ENCODE measurements at regions of chr19 and their contacts with region 1.

Region 1: DNA sequence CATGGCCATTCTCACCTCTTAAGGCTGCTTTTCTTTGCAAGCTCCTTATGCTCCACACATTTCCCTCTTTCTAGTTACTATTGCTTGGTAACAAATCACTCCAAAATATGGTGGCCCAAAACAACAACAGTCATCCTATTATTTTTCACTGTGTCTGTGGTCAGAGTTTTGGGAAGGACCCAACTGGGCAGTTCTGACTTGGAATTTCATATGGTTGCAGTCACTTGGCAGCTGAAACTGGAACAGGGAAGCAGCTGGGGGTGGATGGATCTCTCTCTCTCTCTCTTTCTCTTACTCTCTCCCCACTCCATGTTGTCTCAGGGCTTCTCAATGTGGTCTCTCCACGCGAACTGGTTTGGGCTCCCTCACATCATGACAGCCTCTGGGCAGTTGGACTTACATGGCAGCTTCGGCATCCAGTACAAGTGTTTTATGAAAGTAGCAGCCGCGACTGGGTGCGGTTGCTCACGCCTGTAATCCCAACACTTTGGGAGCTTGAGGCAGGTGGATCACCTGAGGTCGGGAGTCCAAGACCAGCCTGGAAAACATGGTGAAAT is 39.6 kb downstream of the NUMBL start:
- DNase-seq: no peak
- CTCF ChIP-seq: no peak

Region 2: GRCh38 chr19:40811478-40812341 is 160.9 kb after region 1 on chr19:
- in situ Hi-C with region 1: loop called (anchors 10 kb)
- DNase-seq: no peak
- CTCF ChIP-seq: peak; percentile 20

Measured in GM13977 (cell line).